H1 (cell line): ENCODE measurements at regions of chr9 and their contacts with region 1.

Region 1: GRCh38 chr9:2050236-2050635 is 35.1 kb downstream of the SMARCA2 start:
- DNase-seq: no peak
- H3K4me3 ChIP-seq: no peak overlapping the region
- H3K27ac ChIP-seq: no peak overlapping the region
- H3K4me1 ChIP-seq: peaks cover 0 to 4% (median 0%) of the 10 kb centered on the region in 4 experiments; a peak in 1 of 7 replicates
- H3K27me3 ChIP-seq: peaks cover 0 to 15% (median 8%) of the 10 kb centered on the region in 4 experiments; a peak in 6 of 7 replicates
- CTCF ChIP-seq: no peak
- EP300 ChIP-seq: no peak
- POLR2A ChIP-seq: no peak
- RAD21 ChIP-seq: no peak

Region 2: DNA sequence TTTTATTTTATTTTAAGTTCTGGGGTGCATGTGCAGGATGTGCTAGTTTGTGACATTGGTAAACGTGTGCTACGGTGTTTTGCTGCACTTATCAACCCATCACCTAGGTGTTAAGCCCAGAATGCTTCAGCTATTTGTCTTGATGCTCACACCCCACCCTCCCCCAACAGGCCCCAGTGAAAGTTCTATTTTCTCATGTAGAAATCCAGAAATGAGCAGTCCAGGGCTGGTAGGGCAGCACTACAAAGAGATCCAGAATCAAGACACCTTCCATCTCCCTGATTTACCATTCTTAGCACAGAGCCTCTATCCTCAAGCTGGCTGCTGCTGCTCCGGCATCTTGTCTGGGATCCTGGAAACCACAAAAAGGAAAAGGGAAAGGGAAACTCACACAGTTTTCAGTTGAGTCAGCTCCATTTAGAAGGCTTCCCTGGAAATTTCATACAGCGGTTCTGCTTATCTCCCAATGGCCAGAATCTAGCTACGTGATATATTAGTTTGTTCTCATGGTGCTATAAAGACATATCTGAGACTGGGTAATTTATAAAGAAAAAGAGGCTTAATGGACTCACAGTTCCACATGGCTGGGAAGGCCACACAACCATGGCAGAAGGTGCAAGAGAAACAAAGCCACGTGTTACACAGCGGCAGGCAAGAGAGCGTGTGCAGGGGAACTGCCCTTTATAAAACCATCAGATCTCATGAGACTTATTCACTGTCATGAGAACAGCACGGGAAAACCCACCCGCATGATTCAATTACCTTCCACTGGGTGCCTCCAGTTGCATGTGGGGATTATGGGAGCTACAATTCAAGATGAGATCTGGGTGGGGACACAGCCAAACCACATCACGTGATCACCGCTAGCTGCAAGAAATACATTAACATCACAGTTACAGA is 120.3 kb before region 1 on chr9:
- CTCF ChIA-PET with region 1: no interaction called
- POLR2A ChIA-PET with region 1: no interaction called
- DNase-seq: no peak
- H3K4me3 ChIP-seq: no peak overlapping the region
- H3K27ac ChIP-seq: no peak overlapping the region
- H3K4me1 ChIP-seq: no peaks in the 10 kb centered on the region
- H3K27me3 ChIP-seq: no peaks in the 10 kb centered on the region
- CTCF ChIP-seq: no peak
- EP300 ChIP-seq: no peak
- POLR2A ChIP-seq: no peak
- RAD21 ChIP-seq: no peak

Region 3: GRCh38 chr9:2026220-2026997 is 23.8 kb before region 1 on chr9:
- CTCF ChIA-PET with region 1: no interaction called
- POLR2A ChIA-PET with region 1: no interaction called
- DNase-seq: no peak
- H3K4me3 ChIP-seq: no peak overlapping the region
- H3K27ac ChIP-seq: no peak overlapping the region
- H3K4me1 ChIP-seq: peaks cover 0 to 14% (median 6%) of the 10 kb centered on the region in 4 experiments; a peak in 5 of 7 replicates
- H3K27me3 ChIP-seq: peaks cover 0 to 3% (median 0%) of the 10 kb centered on the region in 4 experiments; a peak in 1 of 7 replicates
- CTCF ChIP-seq: no peak
- EP300 ChIP-seq: no peak
- POLR2A ChIP-seq: no peak
- RAD21 ChIP-seq: no peak

Region 4: GRCh38 chr9:2039294-2040190 is 10.7 kb before region 1 on chr9:
- CTCF ChIA-PET with region 1: no interaction called
- POLR2A ChIA-PET with region 1: interaction called, 10 read pairs
- DNase-seq: no peak
- H3K4me3 ChIP-seq: no peak overlapping the region
- H3K27ac ChIP-seq: no peak overlapping the region
- H3K4me1 ChIP-seq: no peaks in the 10 kb centered on the region
- H3K27me3 ChIP-seq: no peaks in the 10 kb centered on the region
- CTCF ChIP-seq: no peak
- EP300 ChIP-seq: no peak
- POLR2A ChIP-seq: no peak
- RAD21 ChIP-seq: no peak

Region 5: GRCh38 chr9:2345013-2345412 is 294.8 kb after region 1 on chr9:
- CTCF ChIA-PET with region 1: no interaction called
- POLR2A ChIA-PET with region 1: no interaction called
- DNase-seq: peak in 1 of 2 experiments; percentile 13
- H3K4me3 ChIP-seq: no peak overlapping the region
- H3K27ac ChIP-seq: no peak overlapping the region
- H3K4me1 ChIP-seq: no peaks in the 10 kb centered on the region
- H3K27me3 ChIP-seq: no peaks in the 10 kb centered on the region
- CTCF ChIP-seq: no peak
- EP300 ChIP-seq: no peak
- POLR2A ChIP-seq: no peak
- RAD21 ChIP-seq: no peak